Naive thymus-derived CD4-positive, alpha-beta T cell (primary cell): ENCODE measurements at regions of chr9 and their contacts with region 1.

Region 1: DNA sequence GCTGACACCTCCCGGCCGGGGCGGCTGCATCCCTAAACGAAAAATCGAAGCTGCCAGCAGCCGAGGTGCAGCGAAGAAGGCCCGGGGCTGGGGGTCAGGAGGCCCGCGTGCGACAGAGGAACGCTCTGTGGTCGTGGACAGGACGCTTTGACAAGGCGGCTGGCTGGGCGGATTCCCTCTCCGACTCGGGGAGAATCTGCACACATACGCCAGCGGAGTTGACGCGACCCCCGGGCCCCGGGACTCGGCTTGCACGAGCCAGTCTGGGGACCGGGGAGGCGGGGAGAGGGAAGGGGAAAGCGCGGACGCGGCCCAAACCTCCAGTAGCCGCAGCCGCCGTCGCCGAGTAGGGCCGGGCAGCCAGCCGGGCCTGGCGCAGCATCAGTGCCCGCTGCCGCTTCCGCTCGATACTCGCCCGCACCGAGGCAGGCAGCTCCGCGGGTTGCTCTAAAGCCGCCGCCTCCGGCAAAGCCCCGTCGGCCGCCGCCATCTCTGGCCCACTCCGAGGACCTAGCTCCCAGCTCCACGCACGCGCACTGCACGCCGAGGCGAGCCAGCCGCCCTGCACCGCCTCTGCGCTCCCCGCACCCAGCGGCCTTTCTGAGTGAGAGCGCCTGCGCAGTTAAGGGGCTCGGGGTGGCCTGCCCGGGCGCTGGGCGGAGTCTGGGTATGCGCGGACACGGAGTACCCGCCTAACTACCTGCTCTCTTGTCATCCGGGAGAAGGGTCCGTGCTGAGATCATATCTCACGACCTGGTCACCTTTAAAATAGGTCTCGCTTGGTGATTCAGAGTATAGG is at the start of gene XPA:
- DNase-seq: peak; percentile 95 to 98 (median 96)
- ATAC-seq: peak; percentile 97
- H3K4me3 ChIP-seq: peak within 1 kb of the TSS; percentile 68
- H3K4me3 Mint-ChIP-seq: peak within 1 kb of the TSS; percentile 87 to 96 (median 90)
- H3K27ac ChIP-seq: peak within 1 kb of the TSS; percentile 85
- H3K27ac Mint-ChIP-seq: peak within 1 kb of the TSS; percentile 85 to 98 (median 93)
- H3K4me1 ChIP-seq: peaks cover 32 to 38% of the 10 kb centered on the region in 2 donors
- H3K4me1 Mint-ChIP-seq: peaks cover 53 to 70% (median 65%) of the 10 kb centered on the region in 7 donors
- H3K27me3 ChIP-seq: no peaks in the 10 kb centered on the region
- H3K27me3 Mint-ChIP-seq: peaks cover 0 to 8% (median 0%) of the 10 kb centered on the region in 5 donors
- total RNA-seq, gene XPA: 16.7 to 30.3 (median 23.2) TPM

Region 2: GRCh38 chr9:97651646-97652045 is 45.4 kb before region 1 on chr9:
- CTCF ChIA-PET with region 1: no interaction called
- POLR2A ChIA-PET with region 1: interaction called, 7 read pairs
- intact Hi-C with region 1: loop called in 1 of 2 experiments (anchors 5 kb)
- DNase-seq: no peak
- ATAC-seq: no peak
- H3K4me3 ChIP-seq: no peak overlapping the region
- H3K4me3 Mint-ChIP-seq: no peak overlapping the region
- H3K27ac ChIP-seq: no peak overlapping the region
- H3K27ac Mint-ChIP-seq: peak overlapping the region in 1 of 9 donors; percentile 28
- H3K4me1 ChIP-seq: no peaks in the 10 kb centered on the region
- H3K4me1 Mint-ChIP-seq: peaks cover 0 to 18% (median 3%) of the 10 kb centered on the region in 7 donors
- H3K27me3 ChIP-seq: no peaks in the 10 kb centered on the region
- H3K27me3 Mint-ChIP-seq: no peaks in the 10 kb centered on the region

Region 3: GRCh38 chr9:97675655-97676054 is 21.3 kb before region 1 on chr9:
- CTCF ChIA-PET with region 1: no interaction called
- POLR2A ChIA-PET with region 1: interaction called, 4 read pairs
- intact Hi-C with region 1: loop called in 1 of 2 experiments (anchors 2 kb)
- DNase-seq: no peak
- ATAC-seq: no peak
- H3K4me3 ChIP-seq: no peak overlapping the region
- H3K4me3 Mint-ChIP-seq: no peak overlapping the region
- H3K27ac ChIP-seq: no peak overlapping the region
- H3K27ac Mint-ChIP-seq: peak overlapping the region in 2 of 9 donors; percentile 10 to 69
- H3K4me1 ChIP-seq: no peaks in the 10 kb centered on the region
- H3K4me1 Mint-ChIP-seq: peaks cover 0 to 20% (median 6%) of the 10 kb centered on the region in 7 donors
- H3K27me3 ChIP-seq: no peaks in the 10 kb centered on the region
- H3K27me3 Mint-ChIP-seq: no peaks in the 10 kb centered on the region

Region 4: GRCh38 chr9:97803167-97804058 is 106.4 kb after region 1 on chr9:
- CTCF ChIA-PET with region 1: no interaction called
- POLR2A ChIA-PET with region 1: no interaction called
- intact Hi-C with region 1: loop called (anchors 1 to 5 kb)
- DNase-seq: peak; percentile 59 to 77 (median 75)
- ATAC-seq: peak; percentile 98
- H3K4me3 ChIP-seq: peak overlapping the region; percentile 72
- H3K4me3 Mint-ChIP-seq: peak overlapping the region; percentile 78 to 92 (median 87)
- H3K27ac ChIP-seq: peak overlapping the region; percentile 45
- H3K27ac Mint-ChIP-seq: peak overlapping the region in 7 of 9 donors; percentile 28 to 86 (median 80)
- H3K4me1 ChIP-seq: no peaks in the 10 kb centered on the region
- H3K4me1 Mint-ChIP-seq: peaks cover 0 to 13% (median 9%) of the 10 kb centered on the region in 7 donors
- H3K27me3 ChIP-seq: no peaks in the 10 kb centered on the region
- H3K27me3 Mint-ChIP-seq: peaks cover 4 to 51% (median 17%) of the 10 kb centered on the region in 5 donors

Region 5: GRCh38 chr9:97873877-97874276 is 176.9 kb after region 1 on chr9:
- CTCF ChIA-PET with region 1: no interaction called
- POLR2A ChIA-PET with region 1: no interaction called
- intact Hi-C with region 1: no loop called
- DNase-seq: no peak
- ATAC-seq: no peak
- H3K4me3 ChIP-seq: no peak overlapping the region
- H3K4me3 Mint-ChIP-seq: no peak overlapping the region
- H3K27ac ChIP-seq: no peak overlapping the region
- H3K27ac Mint-ChIP-seq: no peak overlapping the region
- H3K4me1 ChIP-seq: no peaks in the 10 kb centered on the region
- H3K4me1 Mint-ChIP-seq: peaks cover 0 to 5% (median 0%) of the 10 kb centered on the region in 7 donors
- H3K27me3 ChIP-seq: no peaks in the 10 kb centered on the region
- H3K27me3 Mint-ChIP-seq: peaks cover 4 to 28% (median 10%) of the 10 kb centered on the region in 5 donors

Region 6: DNA sequence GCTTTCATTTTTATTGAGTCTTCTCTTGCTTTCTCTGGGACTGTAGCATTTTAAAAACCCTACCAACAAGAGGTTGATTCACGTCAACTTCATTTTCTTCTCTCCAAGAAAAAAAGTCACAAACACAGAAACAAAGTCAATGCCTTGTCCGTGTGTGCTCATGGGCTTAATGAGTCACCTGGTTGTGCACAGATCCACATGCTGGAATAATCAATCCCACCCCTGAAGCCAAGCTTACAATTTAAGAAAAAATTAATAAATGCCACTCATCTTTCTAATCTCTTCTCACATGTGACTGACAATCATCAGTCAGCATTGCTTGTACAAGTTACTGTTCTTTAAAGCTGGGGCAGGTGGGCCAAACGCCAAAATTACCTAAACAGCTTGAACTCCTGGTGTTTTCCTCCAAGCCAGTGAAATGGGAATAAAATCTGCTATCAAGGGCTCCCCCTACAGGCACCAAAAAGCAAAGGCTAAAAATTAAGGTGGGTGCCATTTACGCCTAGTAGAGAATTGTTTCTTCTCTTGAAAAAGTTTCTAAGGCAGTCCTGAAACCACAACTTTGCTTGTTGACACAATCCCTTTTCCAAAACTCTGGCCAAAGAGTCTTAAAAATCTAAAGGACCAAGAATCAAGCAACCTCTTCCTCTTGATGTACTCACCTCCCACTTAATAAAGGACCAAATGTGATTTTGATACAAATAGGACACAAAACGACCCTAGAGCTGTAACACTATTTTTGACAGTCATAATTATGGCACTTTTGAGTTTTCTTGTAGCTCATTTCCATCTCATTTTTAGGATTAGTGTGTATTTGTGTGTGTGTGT is 203.9 kb after region 1 on chr9:
- CTCF ChIA-PET with region 1: interaction called, 3 read pairs
- POLR2A ChIA-PET with region 1: interaction called, 19 read pairs
- intact Hi-C with region 1: loop called in 1 of 2 experiments (anchors 5 kb)
- DNase-seq: peak in 4 of 9 donors; percentile 27 to 43 (median 40)
- ATAC-seq: peak; percentile 36
- H3K4me3 ChIP-seq: no peak overlapping the region
- H3K4me3 Mint-ChIP-seq: peak overlapping the region in 8 of 10 donors; percentile 3 to 74 (median 32)
- H3K27ac ChIP-seq: peak overlapping the region; percentile 52
- H3K27ac Mint-ChIP-seq: peak overlapping the region in 8 of 9 donors; percentile 81 to 99 (median 94)
- H3K4me1 ChIP-seq: peaks cover 45 to 55% of the 10 kb centered on the region in 2 donors
- H3K4me1 Mint-ChIP-seq: peaks cover 39 to 73% (median 69%) of the 10 kb centered on the region in 7 donors
- H3K27me3 ChIP-seq: no peaks in the 10 kb centered on the region
- H3K27me3 Mint-ChIP-seq: no peaks in the 10 kb centered on the region

Region 7: DNA sequence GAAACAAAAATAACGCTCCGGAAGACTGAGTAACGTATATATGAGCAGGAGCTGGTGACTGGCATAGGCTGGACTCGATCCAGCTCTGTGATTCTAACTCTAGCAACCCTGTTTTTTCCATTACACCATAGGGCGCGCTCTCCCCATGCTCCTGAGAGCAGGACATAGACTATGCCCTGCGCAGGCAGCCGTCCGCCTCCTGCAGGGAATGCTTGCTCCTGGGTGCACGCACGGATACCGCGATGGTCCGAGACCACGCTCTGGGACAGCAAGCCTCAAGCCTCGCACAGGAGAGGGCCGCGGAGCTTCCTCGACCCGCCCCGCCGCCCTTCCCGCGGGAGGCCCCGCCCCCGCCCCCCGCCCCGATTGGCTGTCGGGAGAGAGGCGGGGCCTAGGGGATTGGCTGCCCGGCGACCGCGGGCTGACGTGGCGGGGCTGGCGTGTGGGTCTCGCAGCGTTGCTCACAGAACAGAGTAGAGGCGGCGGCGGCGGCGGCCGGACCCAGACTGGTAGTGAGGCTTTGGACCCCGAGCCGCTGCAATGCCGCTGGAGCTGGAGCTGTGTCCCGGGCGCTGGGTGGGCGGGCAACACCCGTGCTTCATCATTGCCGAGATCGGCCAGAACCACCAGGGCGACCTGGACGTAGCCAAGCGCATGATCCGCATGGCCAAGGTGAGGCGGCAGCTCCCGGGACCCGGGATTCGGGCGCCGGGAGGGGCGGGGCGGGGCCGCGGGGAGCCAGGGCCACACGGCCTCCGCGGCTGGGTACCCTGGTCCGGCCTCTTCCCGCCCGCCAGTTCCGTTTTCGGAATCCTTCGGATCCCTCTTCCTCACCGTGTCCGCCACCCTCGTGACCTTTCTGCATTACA is 359.5 kb after region 1 on chr9 and contains the start of gene NANS:
- CTCF ChIA-PET with region 1: no interaction called
- POLR2A ChIA-PET with region 1: interaction called, 3 read pairs
- intact Hi-C with region 1: loop called in 1 of 2 experiments (anchors 2 kb)
- DNase-seq: peak; percentile 84 to 93 (median 91)
- ATAC-seq: peak; percentile 99
- H3K4me3 ChIP-seq: peak within 1 kb of the TSS; percentile 73
- H3K4me3 Mint-ChIP-seq: peak within 1 kb of the TSS; percentile 93 to 100 (median 95)
- H3K27ac ChIP-seq: peak within 1 kb of the TSS; percentile 93
- H3K27ac Mint-ChIP-seq: peak within 1 kb of the TSS; percentile 93 to 100 (median 97)
- H3K4me1 ChIP-seq: peaks cover 9 to 22% of the 10 kb centered on the region in 2 donors
- H3K4me1 Mint-ChIP-seq: peaks cover 6 to 40% (median 27%) of the 10 kb centered on the region in 7 donors
- H3K27me3 ChIP-seq: no peaks in the 10 kb centered on the region
- H3K27me3 Mint-ChIP-seq: no peaks in the 10 kb centered on the region
- total RNA-seq, gene NANS: 16.3 to 58.9 (median 51.8) TPM